Activated CD4-positive, alpha-beta memory T cell treated with anti-CD3 and anti-CD28 coated beads for 36 hours (primary cell): ENCODE measurements at regions of chr11 and their contacts with region 1.

Region 1: DNA sequence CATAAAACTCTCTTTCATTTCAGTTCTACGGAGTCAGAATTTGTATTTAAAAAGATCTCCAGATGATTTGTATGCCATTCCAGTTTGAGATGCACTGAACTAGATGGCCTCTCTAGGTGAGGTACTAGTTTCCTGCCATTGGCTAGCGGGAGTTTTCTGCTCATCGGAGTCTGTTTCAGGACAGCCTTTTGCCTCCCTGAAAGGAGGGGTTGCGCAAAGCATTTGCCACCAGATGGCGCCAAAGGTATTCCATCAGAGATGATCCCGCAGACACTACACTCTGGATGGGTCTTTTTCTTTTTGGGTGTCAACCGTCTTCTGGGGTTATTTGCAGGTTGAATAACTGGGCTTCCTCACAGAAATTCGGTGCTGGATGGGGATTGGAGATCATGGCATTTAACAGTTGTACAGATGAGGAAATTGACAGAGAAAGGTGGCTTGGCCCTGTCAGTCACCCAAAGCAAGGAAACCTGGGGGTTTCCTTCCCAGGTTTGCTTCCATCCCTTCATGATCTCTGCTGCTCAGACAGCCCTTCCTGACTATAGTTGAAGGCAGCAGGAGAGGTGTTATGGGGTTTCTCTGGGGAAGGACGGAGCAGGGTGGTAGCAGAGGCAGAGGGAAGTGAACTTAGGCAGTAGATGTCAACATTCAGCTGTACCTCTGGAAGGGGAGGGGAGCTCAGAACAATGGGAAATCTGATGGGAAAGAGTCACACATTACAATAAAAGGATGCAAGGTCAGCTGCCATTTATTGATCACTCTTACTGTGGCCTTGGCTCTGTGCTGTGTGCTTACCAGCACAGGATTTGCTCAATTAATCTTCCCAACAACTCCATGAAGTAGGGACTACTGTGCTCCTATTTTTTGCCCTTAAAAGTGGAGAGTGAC is 81.6 kb downstream of the CCDC81 start:
- DNase-seq: peak; percentile 88
- H3K4me3 Mint-ChIP-seq: no peak overlapping the region
- H3K27ac Mint-ChIP-seq: no peak overlapping the region
- H3K4me1 Mint-ChIP-seq: peaks cover 16% of the 10 kb centered on the region
- H3K27me3 Mint-ChIP-seq: no peaks in the 10 kb centered on the region

Region 2: DNA sequence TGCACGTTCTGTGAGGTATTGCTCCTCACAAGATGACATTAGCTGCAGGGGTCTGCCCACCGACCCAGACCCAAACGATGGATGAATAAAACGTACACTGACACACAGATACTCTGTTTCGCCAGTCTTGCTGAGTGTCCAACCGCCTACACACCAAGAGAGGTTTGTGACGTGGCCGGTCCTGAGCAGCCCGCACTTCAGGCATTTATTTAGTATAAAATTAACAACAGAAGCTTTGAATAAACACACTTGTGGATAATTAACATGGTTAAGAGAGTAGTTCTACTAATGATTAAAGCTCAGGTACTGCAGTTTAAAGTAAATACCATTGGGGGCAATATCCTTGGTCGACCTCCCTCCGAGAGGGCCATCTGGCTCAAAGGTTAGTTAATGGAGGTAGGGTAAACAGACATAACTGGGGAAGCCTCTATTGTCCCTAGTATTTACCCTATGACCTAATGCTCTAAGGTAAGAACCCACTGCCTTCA is 525.4 kb before region 1 on chr11:
- CTCF ChIA-PET with region 1: no interaction called
- POLR2A ChIA-PET with region 1: no interaction called
- intact Hi-C with region 1: no loop called
- DNase-seq: no peak
- H3K4me3 Mint-ChIP-seq: no peak overlapping the region
- H3K27ac Mint-ChIP-seq: no peak overlapping the region
- H3K4me1 Mint-ChIP-seq: no peaks in the 10 kb centered on the region
- H3K27me3 Mint-ChIP-seq: peaks cover 15% of the 10 kb centered on the region

Region 3: GRCh38 chr11:86499721-86500141 is 43.4 kb after region 1 on chr11:
- CTCF ChIA-PET with region 1: no interaction called
- POLR2A ChIA-PET with region 1: no interaction called
- intact Hi-C with region 1: loop called (anchors 5 kb)
- DNase-seq: no peak
- H3K4me3 Mint-ChIP-seq: no peak overlapping the region
- H3K27ac Mint-ChIP-seq: no peak overlapping the region
- H3K4me1 Mint-ChIP-seq: peaks cover 6% of the 10 kb centered on the region
- H3K27me3 Mint-ChIP-seq: peaks cover 3% of the 10 kb centered on the region

Region 4: GRCh38 chr11:86671682-86672621 is 215.7 kb after region 1 on chr11 and contains the start of gene ME3:
- CTCF ChIA-PET with region 1: no interaction called
- POLR2A ChIA-PET with region 1: no interaction called
- intact Hi-C with region 1: loop called (anchors 5 kb)
- DNase-seq: peak; percentile 61
- H3K4me3 Mint-ChIP-seq: peak within 1 kb of the TSS; percentile 66
- H3K27ac Mint-ChIP-seq: no peak within 1 kb of the TSS
- H3K4me1 Mint-ChIP-seq: peaks cover 8% of the 10 kb centered on the region
- H3K27me3 Mint-ChIP-seq: peaks cover 23% of the 10 kb centered on the region
- total RNA-seq, gene ME3: 2.3 to 2.8 TPM

Region 5: DNA sequence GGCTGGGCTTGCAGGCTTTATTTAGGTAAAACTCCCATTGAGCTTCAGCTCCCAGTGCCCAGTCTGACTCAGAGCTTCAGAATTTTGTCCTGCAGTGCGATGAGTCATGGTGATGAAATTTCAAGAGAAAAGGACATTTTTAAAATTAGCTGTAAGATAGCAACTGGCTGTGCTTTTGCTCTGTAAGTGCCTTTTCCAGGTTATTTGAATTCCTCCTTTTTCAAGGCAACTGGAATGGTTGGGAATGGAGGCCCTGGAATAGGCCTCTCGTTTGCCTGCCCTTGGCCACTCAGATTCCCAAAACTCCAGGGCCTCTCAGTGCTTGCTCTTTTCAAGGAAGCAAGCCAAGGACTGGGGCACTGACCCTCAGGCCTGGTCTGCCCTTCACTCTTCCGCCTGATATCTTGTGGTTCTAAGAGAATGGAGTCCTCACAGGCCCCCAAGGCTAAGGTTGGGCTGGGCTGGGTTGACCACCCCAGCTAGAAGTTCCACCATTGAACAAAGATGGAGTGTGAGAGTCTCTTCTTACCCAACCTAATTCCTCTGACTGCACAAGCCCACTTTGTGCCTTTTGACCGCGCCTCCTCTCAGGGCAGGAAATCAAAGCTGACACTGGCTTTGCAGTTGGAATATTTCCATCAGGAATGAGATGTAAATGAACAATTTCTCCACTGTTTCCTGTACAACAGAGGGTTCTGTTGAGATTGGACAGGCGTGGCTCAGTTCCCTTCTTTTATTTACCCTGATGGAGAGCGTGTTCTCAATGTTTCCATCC is 284.6 kb after region 1 on chr11:
- CTCF ChIA-PET with region 1: no interaction called
- POLR2A ChIA-PET with region 1: no interaction called
- intact Hi-C with region 1: loop called (anchors 10 kb)
- DNase-seq: peak; percentile 55
- H3K4me3 Mint-ChIP-seq: no peak overlapping the region
- H3K27ac Mint-ChIP-seq: no peak overlapping the region
- H3K4me1 Mint-ChIP-seq: peaks cover 19% of the 10 kb centered on the region
- H3K27me3 Mint-ChIP-seq: peaks cover 4% of the 10 kb centered on the region

Region 6: GRCh38 chr11:86818466-86819192 is 362.3 kb after region 1 on chr11:
- CTCF ChIA-PET with region 1: interaction called, 29 read pairs
- POLR2A ChIA-PET with region 1: no interaction called
- intact Hi-C with region 1: loop called (anchors 1 kb)
- DNase-seq: no peak
- H3K4me3 Mint-ChIP-seq: no peak overlapping the region
- H3K27ac Mint-ChIP-seq: no peak overlapping the region
- H3K4me1 Mint-ChIP-seq: peaks cover 2% of the 10 kb centered on the region
- H3K27me3 Mint-ChIP-seq: peaks cover 13% of the 10 kb centered on the region